B cell (primary cell): ENCODE measurements at regions of chr3 and their contacts with region 1.

Region 1: GRCh38 chr3:8416965-8417364 is 84.7 kb upstream of the LMCD1 start:
- DNase-seq: no peak
- ATAC-seq: no peak
- H3K4me3 ChIP-seq: no peak overlapping the region
- H3K4me3 Mint-ChIP-seq: no peak overlapping the region
- H3K27ac ChIP-seq: no peak overlapping the region
- H3K27ac Mint-ChIP-seq: no peak overlapping the region
- H3K4me1 ChIP-seq: no peaks in the 10 kb centered on the region
- H3K4me1 Mint-ChIP-seq: peaks cover 3% of the 10 kb centered on the region
- H3K27me3 ChIP-seq: no peaks in the 10 kb centered on the region
- H3K27me3 Mint-ChIP-seq: no peaks in the 10 kb centered on the region
- CTCF ChIP-seq: no peak

Region 2: DNA sequence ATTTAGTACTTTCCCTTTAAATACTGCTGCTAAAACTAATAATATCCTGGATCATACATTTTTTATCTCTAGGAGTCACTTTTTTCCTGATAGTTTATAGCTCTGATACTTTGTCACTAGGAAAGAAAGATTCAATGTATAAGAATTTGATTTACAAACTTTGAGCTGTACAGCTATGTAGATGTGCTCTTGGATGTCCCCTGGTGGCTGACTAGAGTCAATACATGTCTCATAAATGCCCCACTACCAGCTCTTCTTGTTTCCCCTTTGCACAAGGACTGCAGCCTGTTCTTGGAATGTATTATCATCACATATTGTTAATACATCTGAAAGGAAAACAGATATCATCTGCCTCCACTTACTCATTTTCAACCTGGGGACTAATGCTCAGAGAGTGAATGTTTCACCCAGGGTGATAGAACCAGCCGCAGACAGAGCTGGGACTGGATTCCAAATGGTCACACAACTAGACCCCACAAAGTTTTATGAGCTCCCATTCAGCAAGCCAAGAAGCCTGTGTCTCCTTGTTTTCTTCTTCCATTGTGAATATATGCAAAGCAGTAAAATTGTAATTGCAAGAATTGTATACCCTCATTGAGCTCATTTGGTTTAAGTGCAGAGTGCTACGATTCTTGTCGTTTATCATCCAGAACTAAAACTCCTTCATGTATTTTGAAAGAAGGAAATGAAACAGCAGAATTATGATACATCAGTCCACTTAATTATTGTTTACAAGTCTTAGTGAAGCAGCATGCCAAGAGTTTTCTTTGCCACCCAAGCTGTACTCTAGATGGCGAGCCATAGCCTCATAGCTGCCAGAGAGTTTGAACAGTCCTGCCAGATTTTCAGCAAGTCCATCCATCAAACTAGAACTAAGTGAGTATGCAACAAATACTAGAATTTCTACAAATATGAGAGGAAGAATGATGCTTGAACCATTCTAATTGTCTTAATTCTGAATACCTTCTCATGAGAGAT is 177.0 kb before region 1 on chr3:
- CTCF ChIA-PET with region 1: interaction called, 16 read pairs
- POLR2A ChIA-PET with region 1: no interaction called
- intact Hi-C with region 1: no loop called
- DNase-seq: peak; percentile 29
- ATAC-seq: no peak
- H3K4me3 ChIP-seq: no peak overlapping the region
- H3K4me3 Mint-ChIP-seq: no peak overlapping the region
- H3K27ac ChIP-seq: no peak overlapping the region
- H3K27ac Mint-ChIP-seq: no peak overlapping the region
- H3K4me1 ChIP-seq: no peaks in the 10 kb centered on the region
- H3K4me1 Mint-ChIP-seq: no peaks in the 10 kb centered on the region
- H3K27me3 ChIP-seq: no peaks in the 10 kb centered on the region
- H3K27me3 Mint-ChIP-seq: no peaks in the 10 kb centered on the region
- CTCF ChIP-seq: peak; percentile 91

Region 3: GRCh38 chr3:8324740-8325139 is 92.2 kb before region 1 on chr3:
- CTCF ChIA-PET with region 1: interaction called, 47 read pairs
- POLR2A ChIA-PET with region 1: no interaction called
- intact Hi-C with region 1: loop called (anchors 1 kb)
- DNase-seq: peak; percentile 34
- ATAC-seq: no peak
- H3K4me3 ChIP-seq: no peak overlapping the region
- H3K4me3 Mint-ChIP-seq: no peak overlapping the region
- H3K27ac ChIP-seq: no peak overlapping the region
- H3K27ac Mint-ChIP-seq: no peak overlapping the region
- H3K4me1 ChIP-seq: no peaks in the 10 kb centered on the region
- H3K4me1 Mint-ChIP-seq: peaks cover 12% of the 10 kb centered on the region
- H3K27me3 ChIP-seq: peaks cover 0 to 6% (median 1%) of the 10 kb centered on the region in 4 experiments
- H3K27me3 Mint-ChIP-seq: peaks cover 6% of the 10 kb centered on the region
- CTCF ChIP-seq: peak; percentile 33